Cardiac septum (tissue), 1 donor: ENCODE measurements at regions of chr11 and their contacts with region 1.

Region 1: DNA sequence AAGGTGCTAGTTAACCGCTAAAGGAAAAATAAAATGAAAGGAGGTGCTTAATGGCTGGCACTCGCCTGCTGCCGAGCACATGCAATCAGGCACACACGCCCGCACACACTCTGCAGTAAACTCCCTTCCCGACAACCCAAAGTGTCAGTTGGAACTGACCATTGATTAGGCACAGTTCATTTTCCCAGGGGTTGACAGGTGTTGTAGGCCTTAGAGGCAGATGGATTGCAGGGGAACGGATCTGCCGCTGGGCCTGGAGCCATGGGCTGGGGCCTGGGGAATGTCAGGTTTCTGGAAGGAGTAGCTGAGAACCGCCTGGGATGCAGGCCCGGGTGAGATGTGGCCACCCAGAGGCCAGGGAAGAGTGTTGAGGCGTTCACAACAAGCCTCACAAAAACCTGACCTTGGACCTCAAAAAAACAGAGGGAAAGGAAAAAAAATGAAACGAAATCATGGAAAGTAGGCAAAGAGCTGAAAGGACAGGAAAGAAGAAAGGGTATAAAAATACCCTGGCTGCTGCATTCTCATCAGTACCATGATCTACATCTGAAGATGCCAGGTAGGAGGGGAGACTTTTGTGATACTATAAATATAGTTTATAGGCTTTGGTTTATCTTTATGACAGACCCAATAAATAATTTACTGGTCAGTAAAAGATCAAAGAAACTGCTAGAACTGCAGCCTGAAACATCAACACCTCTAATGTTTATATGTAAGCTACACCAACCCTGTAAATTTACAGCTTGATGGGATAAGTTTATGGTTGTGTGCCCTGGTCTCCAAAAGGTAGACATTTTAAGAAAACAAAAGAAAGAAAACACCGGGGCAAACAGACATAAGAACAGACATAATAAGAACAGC is 313.4 kb downstream of the BUD13 start:
- DNase-seq: no peak

Region 2: DNA sequence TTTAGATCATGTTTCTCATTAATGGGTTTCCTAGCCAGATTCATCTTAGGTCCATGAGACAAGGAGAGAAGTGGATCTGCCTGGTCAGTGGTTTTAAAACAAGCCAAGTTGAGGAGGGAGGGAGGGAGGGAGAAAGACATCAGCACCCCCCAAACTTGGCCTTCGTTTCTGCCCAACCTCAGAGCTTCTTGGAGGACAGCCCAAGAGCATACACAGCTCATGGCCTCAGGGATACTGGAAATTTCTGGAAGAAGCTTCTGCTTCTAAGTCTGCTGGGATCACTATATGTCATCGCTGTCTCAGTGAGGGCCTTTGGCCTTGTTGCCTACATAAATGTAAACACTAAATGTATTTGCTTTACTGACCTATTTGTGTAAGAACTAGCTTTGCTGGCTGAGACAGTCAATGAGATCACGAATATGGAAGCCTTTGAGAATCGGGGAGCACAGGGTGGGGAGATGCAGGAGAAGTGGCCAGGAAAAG is 61.8 kb before region 1 on chr11:
- intact Hi-C with region 1: no loop called
- DNase-seq: no peak

Region 3: GRCh38 chr11:116641561-116642045 is 182.2 kb after region 1 on chr11:
- intact Hi-C with region 1: loop called (anchors 5 kb)
- DNase-seq: no peak